Ascending aorta (tissue), 2 donors: ENCODE measurements at regions of chr3 and their contacts with region 1.

Region 1: DNA sequence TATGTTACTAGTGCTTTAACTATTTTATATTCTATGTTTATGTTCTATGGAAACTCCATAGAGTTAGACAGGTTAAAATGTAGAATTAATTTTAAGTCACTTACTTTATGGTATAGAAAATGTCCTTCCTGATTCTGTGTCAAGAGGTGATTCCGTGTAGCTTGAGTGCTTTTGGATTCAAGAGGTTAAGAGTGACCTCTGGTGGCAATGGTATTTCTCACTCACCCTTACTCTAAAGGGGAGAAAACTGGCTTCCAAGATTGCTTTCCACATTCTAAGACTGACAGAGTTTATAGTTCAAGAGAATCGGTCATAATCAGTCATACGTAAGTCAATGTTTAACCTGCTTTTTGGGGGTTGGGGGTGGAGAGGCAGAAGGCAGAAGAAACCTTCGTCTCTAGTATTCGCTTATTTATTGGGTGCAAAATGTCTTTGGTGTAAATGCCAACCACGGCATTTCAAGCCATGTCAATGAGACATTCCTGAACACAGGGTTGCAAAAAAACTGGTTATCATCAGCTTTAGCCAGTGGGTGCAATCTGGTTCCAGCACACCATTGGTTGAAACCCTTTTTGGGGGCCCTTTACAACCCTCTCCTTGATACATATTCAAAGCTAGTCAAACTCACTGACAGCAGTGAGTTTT is 92.0 kb upstream of the VGLL3 start:
- DNase-seq: no peak
- H3K4me3 ChIP-seq: no peak overlapping the region
- H3K27ac ChIP-seq: no peak overlapping the region
- H3K4me1 ChIP-seq: no peaks in the 10 kb centered on the region
- H3K27me3 ChIP-seq: no peaks in the 10 kb centered on the region
- CTCF ChIP-seq: peak; percentile 48 to 69 (median 66)

Region 2: DNA sequence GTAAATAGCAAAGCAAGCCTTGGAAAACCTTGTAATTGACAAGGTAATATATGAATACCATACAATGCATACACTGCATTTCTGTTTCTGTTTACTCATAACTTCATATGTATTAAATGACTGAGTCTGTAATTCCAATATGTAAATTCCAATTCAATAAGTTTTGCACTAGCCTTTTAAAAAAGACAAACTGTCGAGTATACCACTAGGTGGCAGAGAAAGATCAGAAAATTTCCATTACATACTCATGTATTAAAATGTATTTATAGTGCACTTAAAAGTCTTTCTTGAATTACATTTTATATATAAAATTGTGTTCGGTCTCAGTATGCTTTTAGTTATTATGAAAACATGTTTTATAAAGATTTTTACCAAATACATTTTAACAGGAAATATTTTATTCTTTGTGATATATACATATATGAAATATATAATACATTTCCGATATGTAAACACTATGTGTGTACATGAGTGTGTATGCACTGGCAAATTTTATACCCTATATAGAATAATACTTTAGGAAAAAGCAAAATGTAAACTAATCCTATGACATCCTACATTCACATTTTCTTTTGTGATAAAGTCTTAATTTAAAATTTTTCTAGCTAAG is 308.7 kb before region 1 on chr3:
- intact Hi-C with region 1: loop called (anchors 2 kb)
- DNase-seq: no peak
- H3K4me3 ChIP-seq: no peak overlapping the region
- H3K27ac ChIP-seq: no peak overlapping the region
- H3K4me1 ChIP-seq: no peaks in the 10 kb centered on the region
- H3K27me3 ChIP-seq: no peaks in the 10 kb centered on the region
- CTCF ChIP-seq: peak; percentile 10 to 62 (median 57)

Region 3: DNA sequence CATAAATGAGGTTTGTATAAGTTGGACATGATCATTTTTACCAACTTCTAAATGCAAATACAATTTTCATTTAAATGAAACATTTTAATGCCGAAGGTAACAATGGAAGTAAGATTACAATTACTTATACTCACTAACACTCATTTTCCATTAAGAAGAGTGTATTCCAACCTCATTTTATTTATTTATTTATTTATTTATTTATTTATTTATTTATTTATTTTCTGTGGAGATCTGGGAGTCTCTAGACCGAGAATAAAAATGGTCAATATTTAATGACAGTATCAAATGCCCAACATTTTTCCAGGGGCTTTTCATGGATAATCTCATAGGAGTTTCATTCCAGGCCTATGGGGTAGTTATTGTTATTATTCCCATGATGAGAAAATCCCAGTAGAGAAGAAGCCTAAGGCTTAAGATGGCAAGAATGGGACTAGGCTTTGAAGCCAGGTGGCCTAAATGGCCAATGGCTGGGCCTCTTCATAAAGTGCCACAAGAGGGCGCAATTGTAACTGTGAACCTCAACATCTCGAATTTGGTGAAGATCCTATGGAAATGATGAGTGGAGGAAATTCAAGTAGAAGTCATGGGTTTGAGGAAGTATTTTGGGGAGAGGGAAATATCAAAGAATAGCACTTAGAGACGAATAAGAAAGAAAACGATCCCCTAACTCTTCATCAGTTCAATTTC is 113.3 kb before region 1 on chr3:
- intact Hi-C with region 1: loop called (anchors 5 kb)
- DNase-seq: no peak
- H3K4me3 ChIP-seq: no peak overlapping the region
- H3K27ac ChIP-seq: no peak overlapping the region
- H3K4me1 ChIP-seq: no peaks in the 10 kb centered on the region
- H3K27me3 ChIP-seq: no peaks in the 10 kb centered on the region
- CTCF ChIP-seq: peak; percentile 18 to 58 (median 50)

Region 4: GRCh38 chr3:87006844-87007439 is 76.0 kb before region 1 on chr3:
- intact Hi-C with region 1: no loop called
- DNase-seq: no peak
- H3K4me3 ChIP-seq: no peak overlapping the region
- H3K27ac ChIP-seq: no peak overlapping the region
- H3K4me1 ChIP-seq: no peaks in the 10 kb centered on the region
- H3K27me3 ChIP-seq: no peaks in the 10 kb centered on the region
- CTCF ChIP-seq: peak in 1 of 3 experiments; percentile 45

Region 5: GRCh38 chr3:87167628-87168456 is 84.9 kb after region 1 on chr3:
- intact Hi-C with region 1: loop called (anchors 5 kb)
- DNase-seq: no peak
- H3K4me3 ChIP-seq: peak overlapping the region; percentile 44 to 49
- H3K27ac ChIP-seq: no peak overlapping the region
- H3K4me1 ChIP-seq: peaks cover 0 to 2% of the 10 kb centered on the region in 2 donors
- H3K27me3 ChIP-seq: no peaks in the 10 kb centered on the region
- CTCF ChIP-seq: peak in 2 of 3 experiments; percentile 64 to 68